ENCODE measurements at regions of chr20 and their contacts with region 1.

Region 1: DNA sequence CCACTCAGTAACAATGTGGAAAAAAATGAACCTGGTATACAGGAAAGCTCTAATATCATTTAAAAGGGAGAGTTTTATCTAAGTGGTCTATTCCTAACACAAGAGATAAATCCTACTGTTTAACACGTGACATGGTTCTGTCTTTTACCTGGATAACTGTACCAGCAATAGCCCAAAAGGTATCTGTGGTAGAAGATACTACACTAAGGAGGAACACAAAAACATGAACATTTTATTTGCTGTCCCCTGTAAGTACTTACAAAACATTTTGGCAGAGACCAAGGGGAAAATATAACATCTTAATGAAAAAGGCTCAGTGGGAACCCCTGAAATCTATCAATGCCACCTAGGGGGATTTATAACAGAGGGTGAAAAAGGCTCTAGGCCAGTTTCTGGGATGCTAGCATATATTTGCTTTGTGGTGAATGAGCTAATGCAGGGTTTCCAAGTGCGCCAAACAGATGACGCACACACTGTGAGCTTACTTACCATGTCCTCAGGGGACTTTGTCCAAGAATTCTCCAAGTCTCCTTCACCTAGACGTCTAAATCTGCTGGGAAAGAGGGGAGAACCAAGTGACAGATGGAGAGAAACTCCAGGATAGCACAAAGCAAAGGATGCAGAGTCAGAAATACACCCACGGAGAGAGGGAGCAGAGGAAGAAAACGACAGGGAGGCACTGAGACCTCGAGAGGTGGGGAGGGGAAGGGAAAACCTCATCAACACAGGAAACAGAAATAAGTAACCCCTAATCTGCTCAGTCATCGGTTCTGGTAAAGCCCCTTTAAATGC is 147.9 kb upstream of the PRND start:
- DNase-seq: peak; percentile 17 to 70
- H3K4me3 ChIP-seq: no peak overlapping the region
- H3K27ac ChIP-seq: no peak overlapping the region
- H3K4me1 ChIP-seq: no peaks in the 10 kb centered on the region
- H3K27me3 ChIP-seq: no peaks in the 10 kb centered on the region
- CTCF ChIP-seq: no peak

Region 2: DNA sequence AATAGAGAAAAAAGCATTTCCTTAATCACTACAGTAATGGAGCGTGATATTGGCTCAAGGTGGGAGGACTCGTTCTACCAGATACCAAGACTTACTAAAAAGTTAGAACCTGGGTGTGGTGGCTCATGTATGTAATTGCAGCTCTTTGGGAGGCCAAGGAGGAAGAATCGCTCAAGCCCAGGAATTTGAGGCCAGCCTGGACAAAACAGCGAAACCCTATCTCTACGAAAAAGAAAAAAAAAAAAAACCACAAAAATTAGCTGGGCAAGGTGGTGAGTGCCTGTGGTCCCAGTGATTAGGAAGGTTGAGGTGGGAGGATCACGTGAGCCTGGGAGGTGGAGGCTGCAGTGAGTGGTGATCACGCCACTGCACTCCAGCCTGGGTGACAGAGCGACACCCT is 1127.0 kb before region 1 on chr20:
- CTCF ChIA-PET with region 1: no interaction called
- POLR2A ChIA-PET with region 1: interaction called, 28 read pairs
- intact Hi-C with region 1: no loop called
- DNase-seq: peak; percentile 71 to 92
- H3K4me3 ChIP-seq: no peak overlapping the region
- H3K27ac ChIP-seq: no peak overlapping the region
- H3K4me1 ChIP-seq: peaks cover 12% of the 10 kb centered on the region
- H3K27me3 ChIP-seq: no peaks in the 10 kb centered on the region
- CTCF ChIP-seq: no peak

Measured in PC-9 (cell line).